ENCODE measurements at regions of chr1 and their contacts with region 1.

Region 1: GRCh38 chr1:168439456-168440375 is 104.1 kb downstream of the XCL2 start:
- DNase-seq: peak; percentile 95
- ATAC-seq: peak; percentile 93
- H3K4me3 Mint-ChIP-seq: peak overlapping the region; percentile 68
- H3K27ac Mint-ChIP-seq: peak overlapping the region; percentile 94
- H3K4me1 Mint-ChIP-seq: peaks cover 59% of the 10 kb centered on the region
- H3K27me3 Mint-ChIP-seq: no peaks in the 10 kb centered on the region

Region 2: GRCh38 chr1:168365719-168366479 is 73.8 kb before region 1 on chr1:
- CTCF ChIA-PET with region 1: interaction called, 11 read pairs
- DNase-seq: no peak
- ATAC-seq: no peak
- H3K4me3 Mint-ChIP-seq: no peak overlapping the region
- H3K27ac Mint-ChIP-seq: no peak overlapping the region
- H3K4me1 Mint-ChIP-seq: peaks cover 35% of the 10 kb centered on the region
- H3K27me3 Mint-ChIP-seq: no peaks in the 10 kb centered on the region

Region 3: DNA sequence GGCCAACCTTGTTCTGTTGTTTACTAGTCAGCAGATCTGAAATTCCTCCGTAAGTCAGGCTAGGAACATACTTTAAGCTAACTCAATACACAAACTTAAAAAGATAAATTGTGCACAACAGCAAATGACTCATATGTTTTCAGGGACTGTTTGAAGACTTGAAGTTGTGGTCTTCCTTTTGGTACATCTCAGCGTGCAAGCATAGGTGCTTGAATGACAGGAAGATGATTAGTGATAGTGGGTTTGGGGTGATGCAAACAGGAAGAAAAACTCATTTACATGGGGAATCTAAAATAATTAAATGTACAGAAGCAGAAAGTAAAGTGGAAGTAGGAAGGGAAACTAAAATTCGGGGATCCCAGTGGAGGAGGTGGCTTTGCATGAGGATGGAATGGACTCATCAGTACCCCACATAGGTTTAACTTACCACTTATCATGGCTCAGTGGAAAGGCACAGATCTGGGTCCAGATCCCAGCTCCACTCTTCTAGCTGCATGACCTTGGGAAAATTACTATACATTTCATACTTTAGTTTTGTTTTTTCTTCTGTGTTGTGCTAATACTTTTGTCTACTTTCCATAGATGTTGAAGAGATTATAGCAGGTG is 18.2 kb before region 1 on chr1:
- CTCF ChIA-PET with region 1: interaction called, 12 read pairs
- DNase-seq: peak; percentile 61
- ATAC-seq: peak; percentile 98
- H3K4me3 Mint-ChIP-seq: peak overlapping the region; percentile 55
- H3K27ac Mint-ChIP-seq: peak overlapping the region; percentile 96
- H3K4me1 Mint-ChIP-seq: peaks cover 34% of the 10 kb centered on the region
- H3K27me3 Mint-ChIP-seq: no peaks in the 10 kb centered on the region

Region 4: GRCh38 chr1:168466092-168466713 is 26.5 kb after region 1 on chr1:
- CTCF ChIA-PET with region 1: interaction called, 19 read pairs
- DNase-seq: peak; percentile 78
- ATAC-seq: peak; percentile 67
- H3K4me3 Mint-ChIP-seq: no peak overlapping the region
- H3K27ac Mint-ChIP-seq: peak overlapping the region; percentile 84
- H3K4me1 Mint-ChIP-seq: peaks cover 68% of the 10 kb centered on the region
- H3K27me3 Mint-ChIP-seq: no peaks in the 10 kb centered on the region

Region 5: GRCh38 chr1:168603501-168604110 is 163.9 kb after region 1 on chr1:
- CTCF ChIA-PET with region 1: interaction called, 20 read pairs
- DNase-seq: peak; percentile 80
- ATAC-seq: peak; percentile 98
- H3K4me3 Mint-ChIP-seq: no peak overlapping the region
- H3K27ac Mint-ChIP-seq: no peak overlapping the region
- H3K4me1 Mint-ChIP-seq: peaks cover 3% of the 10 kb centered on the region
- H3K27me3 Mint-ChIP-seq: peaks cover 6% of the 10 kb centered on the region

Region 6: DNA sequence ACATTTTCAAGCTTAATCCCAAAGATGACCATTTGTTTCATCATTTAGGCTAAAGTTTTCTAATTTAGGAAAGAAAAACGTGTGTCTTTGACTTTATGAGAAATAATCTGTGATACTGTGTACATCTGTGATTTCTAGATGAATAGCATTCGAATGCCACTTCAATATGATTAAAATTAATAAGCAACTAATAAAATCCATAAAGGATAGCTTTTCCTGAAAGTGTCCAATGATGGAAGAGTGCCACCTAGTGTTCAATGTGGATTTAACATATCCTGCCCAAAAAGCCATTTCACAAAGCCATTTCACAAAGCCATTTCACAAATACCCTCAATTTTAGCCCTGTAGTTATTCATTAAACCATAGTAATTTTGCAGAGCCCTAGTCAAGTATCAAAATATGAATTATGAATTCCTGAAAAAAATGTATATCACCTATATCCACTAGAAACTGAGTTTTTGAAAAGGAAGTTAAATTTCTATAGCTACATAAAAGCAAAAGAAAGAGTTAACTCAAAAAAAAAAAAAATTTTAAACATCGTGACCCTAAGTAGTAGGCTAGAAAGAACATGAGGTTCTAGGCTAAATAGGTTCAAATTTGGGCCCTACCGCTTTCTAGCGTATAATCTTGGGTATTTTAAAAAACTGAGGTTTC is 908.8 kb after region 1 on chr1:
- CTCF ChIA-PET with region 1: interaction called, 15 read pairs
- DNase-seq: no peak
- ATAC-seq: no peak
- H3K4me3 Mint-ChIP-seq: no peak overlapping the region
- H3K27ac Mint-ChIP-seq: no peak overlapping the region
- H3K4me1 Mint-ChIP-seq: peaks cover 17% of the 10 kb centered on the region
- H3K27me3 Mint-ChIP-seq: no peaks in the 10 kb centered on the region